Posterior vena cava (tissue), 2 donors: ENCODE measurements at regions of chr1 and their contacts with region 1.

Region 1: DNA sequence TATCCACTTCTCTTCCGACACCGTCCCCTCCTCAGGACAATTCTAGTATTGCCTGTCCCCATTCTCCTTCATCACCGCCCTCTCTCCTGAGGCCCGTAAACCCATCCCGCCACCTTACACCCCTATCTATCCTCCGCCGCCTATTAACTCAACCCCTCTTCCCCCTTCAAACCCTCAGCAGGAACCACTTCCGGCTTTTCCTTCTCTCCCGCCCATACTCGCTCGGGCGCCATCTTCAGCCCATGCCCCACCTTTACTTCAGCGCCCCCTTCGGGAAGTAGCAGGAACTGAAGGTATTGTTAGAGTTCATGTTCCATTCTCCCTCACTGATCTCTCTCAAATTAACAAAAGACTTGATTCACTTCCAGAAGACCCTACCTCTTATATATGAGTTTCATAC is 31.6 kb downstream of the VN1R5 start:
- DNase-seq: no peak

Region 2: DNA sequence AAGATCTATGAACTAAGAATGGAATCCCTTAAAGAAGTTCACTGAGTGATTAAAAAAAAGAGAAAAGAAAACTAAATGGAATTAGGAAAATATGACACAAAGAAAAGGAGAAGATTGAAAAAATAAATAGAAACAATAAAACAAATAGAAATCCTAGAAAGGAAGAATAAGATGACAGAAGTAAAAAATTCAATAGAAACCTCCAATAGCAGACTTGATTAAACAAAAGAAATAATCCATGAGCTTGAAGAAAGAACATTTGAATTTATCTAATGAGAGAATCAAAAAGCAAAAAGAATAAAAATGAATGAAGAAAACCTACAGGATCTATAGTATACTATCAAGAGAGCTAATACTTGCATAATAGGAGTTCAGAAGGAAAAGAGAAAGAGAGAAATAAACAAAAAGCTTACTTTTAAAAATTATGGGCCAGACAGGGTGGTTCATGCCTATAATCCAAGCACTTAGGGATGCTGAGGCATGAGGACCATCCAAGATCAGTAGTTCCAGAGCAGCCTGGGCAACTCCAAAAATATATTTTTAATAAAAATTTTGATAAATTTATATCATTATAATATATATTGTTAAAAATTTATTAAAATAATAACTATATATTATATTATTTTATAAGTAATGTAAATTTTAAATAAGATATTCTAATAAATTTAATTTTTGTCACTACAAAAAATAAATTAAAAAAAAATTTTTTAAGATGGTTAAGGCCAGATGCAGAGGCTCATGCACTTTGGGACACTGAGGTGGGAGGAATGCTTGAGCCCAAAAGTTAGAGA is 40.9 kb before region 1 on chr1:
- intact Hi-C with region 1: loop called in 1 of 2 experiments (anchors 1 kb)
- DNase-seq: no peak

Region 3: DNA sequence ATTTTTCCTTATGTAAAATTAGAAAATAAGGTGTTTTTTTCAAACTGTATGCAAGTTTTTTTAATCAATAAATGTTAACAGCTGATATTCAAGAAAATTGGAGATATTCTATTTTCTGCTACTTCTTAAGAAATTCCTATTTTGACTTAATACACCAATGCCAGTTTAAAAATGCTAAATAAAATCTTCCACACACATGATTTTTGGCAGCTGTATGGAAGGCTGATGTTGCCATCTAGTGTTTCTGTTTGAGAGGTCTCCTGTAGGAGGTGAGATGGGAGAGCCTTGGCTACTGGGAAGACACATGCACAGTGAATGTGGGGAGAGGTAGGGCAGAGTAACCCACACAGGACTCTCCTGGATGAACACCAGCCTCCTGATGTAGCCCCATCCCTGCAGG is 199.6 kb after region 1 on chr1:
- intact Hi-C with region 1: no loop called
- DNase-seq: no peak